Uterus (tissue), 4 donors: ENCODE measurements at regions of chr17 and their contacts with region 1.

Region 1: DNA sequence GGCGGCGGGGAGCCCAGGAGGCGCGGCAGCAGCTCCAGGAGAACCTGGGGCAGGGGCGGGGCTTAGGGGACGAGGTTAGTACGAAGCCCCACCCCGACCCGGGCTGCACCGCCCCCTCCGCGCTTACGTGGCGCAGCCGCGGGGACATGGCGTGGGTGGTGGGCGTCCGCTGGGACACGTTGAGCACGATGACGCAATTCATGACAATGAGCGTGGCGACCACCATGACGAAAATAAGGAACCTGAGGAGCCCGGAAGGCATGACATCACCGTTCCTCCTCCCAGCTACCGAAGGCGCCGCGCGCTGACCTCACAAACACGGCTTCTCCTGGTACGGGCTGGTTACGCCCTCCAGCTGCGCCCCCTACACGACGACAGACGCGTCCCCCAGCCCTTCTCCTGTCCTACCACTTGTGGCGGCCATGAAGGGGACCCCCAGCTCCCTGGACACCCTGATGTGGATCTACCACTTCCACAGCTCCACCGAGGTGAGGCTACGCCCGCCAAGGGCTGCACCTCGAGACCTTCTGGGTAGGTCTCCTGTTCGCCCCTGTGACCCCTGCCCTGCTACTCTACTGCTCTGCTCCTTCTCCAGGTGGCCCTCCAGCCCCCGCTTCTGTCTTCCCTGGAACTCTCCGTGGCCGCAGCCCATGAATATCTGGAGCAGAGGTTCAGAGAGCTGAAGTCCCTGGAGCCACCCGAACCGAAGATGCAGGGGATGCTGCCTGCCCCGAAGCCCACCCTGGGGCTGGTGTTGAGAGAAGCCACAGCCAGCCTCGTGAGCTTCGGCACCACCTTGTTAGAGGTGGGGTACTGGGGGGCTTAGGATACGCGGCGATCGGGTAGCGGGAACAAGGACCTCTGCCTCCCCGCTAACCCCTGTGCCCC is at the start of gene C17orf107:
- DNase-seq: peak; percentile 79 to 82
- H3K4me3 ChIP-seq: peak within 1 kb of the TSS; percentile 16 to 41
- H3K27ac ChIP-seq: peak within 1 kb of the TSS; percentile 32 to 49
- H3K4me1 ChIP-seq: no peaks in the 10 kb centered on the region
- H3K27me3 ChIP-seq: peaks cover 0 to 4% of the 10 kb centered on the region in 2 donors
- CTCF ChIP-seq: no peak
- POLR2A ChIP-seq: peak in 1 of 2 donors; percentile 34
- total RNA-seq, gene C17orf107: 2.9 to 6.6 (median 3.5) TPM in 3 of 4 donors, not detected in the other

Region 2: DNA sequence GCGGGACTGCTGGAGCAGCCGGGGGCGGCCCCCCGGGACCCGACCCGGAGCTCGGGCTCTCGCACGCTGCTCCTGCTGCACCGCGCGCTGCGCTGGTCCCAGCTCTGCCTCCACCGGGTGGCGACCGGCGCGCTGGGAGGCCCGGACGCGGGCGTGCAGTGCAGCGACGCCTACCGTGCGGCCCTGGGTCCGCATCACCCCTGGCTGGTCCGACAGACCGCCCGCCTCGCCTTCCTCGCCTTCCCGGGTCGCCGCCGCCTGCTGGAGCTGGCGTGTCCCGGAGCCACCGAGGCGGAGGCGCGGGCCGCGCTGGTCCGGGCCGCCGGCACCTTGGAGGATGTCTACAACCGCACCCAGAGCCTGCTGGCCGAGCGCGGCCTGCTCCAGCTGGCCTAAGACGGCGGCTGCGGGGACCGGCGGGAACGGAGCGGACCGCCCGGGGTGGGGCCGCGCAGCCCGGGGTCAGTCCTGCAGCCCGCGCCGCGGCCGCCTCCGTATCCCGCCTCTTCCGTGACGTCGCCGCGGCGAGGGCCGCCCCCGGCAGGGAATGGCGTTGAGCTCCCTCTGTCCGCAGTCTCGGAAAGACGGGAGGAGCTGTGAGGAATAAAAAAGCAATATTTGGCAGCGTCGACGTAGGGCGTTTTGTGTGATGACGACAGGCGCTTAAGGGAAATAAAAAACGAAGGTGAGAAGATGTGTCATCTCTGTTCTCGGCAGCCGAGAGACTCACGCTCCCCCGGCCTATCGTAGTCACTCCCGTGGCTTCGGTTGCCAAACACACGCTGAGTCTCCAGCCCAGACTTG is 109.5 kb before region 1 on chr17:
- intact Hi-C with region 1: loop called (anchors 5 kb)
- DNase-seq: peak; percentile 80 to 87
- H3K4me3 ChIP-seq: peak overlapping the region; percentile 58 to 62
- H3K27ac ChIP-seq: peak overlapping the region; percentile 87 to 95
- H3K4me1 ChIP-seq: peaks cover 0 to 8% of the 10 kb centered on the region in 2 donors
- H3K27me3 ChIP-seq: no peaks in the 10 kb centered on the region
- CTCF ChIP-seq: peak; percentile 57 to 94 (median 84)
- POLR2A ChIP-seq: peak; percentile 57 to 88

Region 3: DNA sequence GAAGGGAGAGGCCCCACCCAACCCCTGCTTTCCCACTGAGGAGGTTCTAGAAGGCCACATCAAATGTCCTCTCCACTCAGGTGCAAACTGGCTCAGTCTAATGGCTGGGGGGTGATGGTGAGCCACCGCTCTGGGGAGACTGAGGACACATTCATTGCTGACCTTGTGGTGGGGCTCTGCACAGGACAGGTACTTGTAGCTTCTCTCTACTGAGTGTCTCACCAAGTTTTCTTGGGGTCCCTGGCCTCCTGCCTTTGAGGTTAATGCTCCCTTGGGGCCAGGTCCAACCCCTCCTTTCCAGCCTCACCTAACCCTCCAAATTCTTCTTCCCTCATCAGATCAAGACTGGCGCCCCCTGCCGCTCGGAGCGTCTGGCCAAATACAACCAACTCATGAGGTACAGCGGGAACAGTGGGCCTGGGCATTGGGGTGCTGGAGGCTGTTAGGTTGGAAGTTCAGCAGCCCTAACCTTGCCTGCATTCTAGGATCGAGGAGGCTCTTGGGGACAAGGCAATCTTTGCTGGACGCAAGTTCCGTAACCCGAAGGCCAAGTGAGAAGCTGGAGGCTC is 57.0 kb after region 1 on chr17:
- intact Hi-C with region 1: no loop called
- DNase-seq: no peak
- H3K4me3 ChIP-seq: no peak overlapping the region
- H3K27ac ChIP-seq: no peak overlapping the region
- H3K4me1 ChIP-seq: no peaks in the 10 kb centered on the region
- H3K27me3 ChIP-seq: no peaks in the 10 kb centered on the region
- CTCF ChIP-seq: no peak
- POLR2A ChIP-seq: no peak

Region 4: GRCh38 chr17:5661491-5662125 is 762.0 kb after region 1 on chr17:
- intact Hi-C with region 1: no loop called
- DNase-seq: no peak
- H3K4me3 ChIP-seq: no peak overlapping the region
- H3K27ac ChIP-seq: no peak overlapping the region
- H3K4me1 ChIP-seq: no peaks in the 10 kb centered on the region
- H3K27me3 ChIP-seq: no peaks in the 10 kb centered on the region
- CTCF ChIP-seq: no peak
- POLR2A ChIP-seq: no peak